ENCODE measurements at regions of chr10 and their contacts with region 1.

Region 1: DNA sequence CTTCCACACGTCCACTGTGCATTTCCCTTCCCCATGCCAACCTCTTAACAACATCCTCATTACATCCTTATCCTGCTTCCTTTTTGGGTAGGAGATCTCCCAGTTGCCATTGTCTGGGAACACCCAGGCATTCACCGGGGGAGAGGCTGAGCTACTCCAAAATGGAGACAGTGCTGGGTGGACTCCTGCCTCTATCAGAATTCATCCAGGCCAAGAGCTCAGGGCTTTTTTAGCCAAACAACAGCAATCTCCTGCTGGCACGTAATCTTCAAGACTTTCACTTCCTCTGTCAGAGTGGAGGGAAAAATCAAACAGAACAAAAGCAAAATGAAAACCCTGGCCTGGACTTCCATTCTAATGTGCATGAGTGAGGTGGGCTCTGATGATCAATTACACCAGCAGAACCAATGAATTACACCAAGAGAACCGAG is 245.0 kb downstream of the PRPF18 start:
- H3K4me3 Mint-ChIP-seq: peak overlapping the region; percentile 59
- H3K27ac Mint-ChIP-seq: peak overlapping the region; percentile 92
- H3K4me1 Mint-ChIP-seq: peaks cover 47% of the 10 kb centered on the region
- H3K27me3 Mint-ChIP-seq: peaks cover 20% of the 10 kb centered on the region

Region 2: DNA sequence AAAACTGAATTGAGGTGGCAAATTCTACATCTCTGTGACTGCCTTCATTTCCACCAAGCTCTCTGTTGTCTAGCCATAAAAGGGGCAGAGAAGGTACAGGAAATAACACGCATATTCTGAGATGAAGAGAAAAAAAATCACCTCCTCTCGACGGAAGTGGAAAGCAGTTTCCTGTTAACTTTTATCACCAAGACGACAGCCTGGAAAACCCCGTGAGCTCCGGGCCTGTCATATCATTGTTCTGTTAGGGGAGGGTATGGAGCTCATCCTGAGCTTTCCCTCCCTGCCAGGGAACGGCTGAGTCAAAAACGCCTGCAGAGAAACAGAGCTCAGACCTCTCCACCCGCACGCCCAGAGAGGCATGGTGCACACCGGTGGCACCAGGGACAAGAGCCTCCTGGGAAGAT is 44.7 kb before region 1 on chr10:
- intact Hi-C with region 1: no loop called
- H3K4me3 Mint-ChIP-seq: no peak overlapping the region
- H3K27ac Mint-ChIP-seq: no peak overlapping the region
- H3K4me1 Mint-ChIP-seq: peaks cover 5% of the 10 kb centered on the region
- H3K27me3 Mint-ChIP-seq: peaks cover 3% of the 10 kb centered on the region

Region 3: GRCh38 chr10:13882112-13882711 is 50.5 kb after region 1 on chr10:
- intact Hi-C with region 1: loop called (anchors 5 kb)
- H3K4me3 Mint-ChIP-seq: no peak overlapping the region
- H3K27ac Mint-ChIP-seq: no peak overlapping the region
- H3K4me1 Mint-ChIP-seq: peaks cover 19% of the 10 kb centered on the region
- H3K27me3 Mint-ChIP-seq: peaks cover 22% of the 10 kb centered on the region

Region 4: DNA sequence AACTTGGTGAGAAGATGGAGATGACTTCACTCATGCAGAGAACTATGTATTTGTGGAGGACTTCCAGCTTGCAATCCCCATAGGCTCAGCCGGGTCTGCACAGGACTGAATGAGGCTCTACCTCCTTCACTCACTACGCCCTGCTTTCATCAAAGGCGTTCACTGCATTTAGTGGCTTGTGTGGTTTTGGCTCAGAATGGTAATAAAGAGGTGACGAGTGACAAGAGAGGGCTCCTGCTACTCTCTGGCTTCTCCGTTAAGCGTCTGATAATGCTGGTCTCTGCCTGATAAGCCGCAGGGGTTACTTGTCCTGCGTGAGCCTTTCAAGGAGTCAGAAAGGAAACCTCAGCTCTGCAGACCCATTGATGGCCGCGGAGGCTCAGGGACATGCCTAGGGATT is 98.4 kb after region 1 on chr10:
- intact Hi-C with region 1: no loop called
- H3K4me3 Mint-ChIP-seq: no peak overlapping the region
- H3K27ac Mint-ChIP-seq: no peak overlapping the region
- H3K4me1 Mint-ChIP-seq: peaks cover 10% of the 10 kb centered on the region
- H3K27me3 Mint-ChIP-seq: peaks cover 77% of the 10 kb centered on the region

Measured in dendritic cell treated with granulocyte-macrophage colony-stimulating factor and Interleukin-4, amounts not matched to agents 40 ng/mL and 50 ng/mL, for 4 days (primary cell).